Activated CD8-positive, alpha-beta T cell treated with anti-CD3 and anti-CD28 coated beads, Interleukin-2, amount 10 ng/mL, durations not matched to agents 7 days and 5 days (primary cell): ENCODE measurements at regions of chr15 and their contacts with region 1.

Region 1: DNA sequence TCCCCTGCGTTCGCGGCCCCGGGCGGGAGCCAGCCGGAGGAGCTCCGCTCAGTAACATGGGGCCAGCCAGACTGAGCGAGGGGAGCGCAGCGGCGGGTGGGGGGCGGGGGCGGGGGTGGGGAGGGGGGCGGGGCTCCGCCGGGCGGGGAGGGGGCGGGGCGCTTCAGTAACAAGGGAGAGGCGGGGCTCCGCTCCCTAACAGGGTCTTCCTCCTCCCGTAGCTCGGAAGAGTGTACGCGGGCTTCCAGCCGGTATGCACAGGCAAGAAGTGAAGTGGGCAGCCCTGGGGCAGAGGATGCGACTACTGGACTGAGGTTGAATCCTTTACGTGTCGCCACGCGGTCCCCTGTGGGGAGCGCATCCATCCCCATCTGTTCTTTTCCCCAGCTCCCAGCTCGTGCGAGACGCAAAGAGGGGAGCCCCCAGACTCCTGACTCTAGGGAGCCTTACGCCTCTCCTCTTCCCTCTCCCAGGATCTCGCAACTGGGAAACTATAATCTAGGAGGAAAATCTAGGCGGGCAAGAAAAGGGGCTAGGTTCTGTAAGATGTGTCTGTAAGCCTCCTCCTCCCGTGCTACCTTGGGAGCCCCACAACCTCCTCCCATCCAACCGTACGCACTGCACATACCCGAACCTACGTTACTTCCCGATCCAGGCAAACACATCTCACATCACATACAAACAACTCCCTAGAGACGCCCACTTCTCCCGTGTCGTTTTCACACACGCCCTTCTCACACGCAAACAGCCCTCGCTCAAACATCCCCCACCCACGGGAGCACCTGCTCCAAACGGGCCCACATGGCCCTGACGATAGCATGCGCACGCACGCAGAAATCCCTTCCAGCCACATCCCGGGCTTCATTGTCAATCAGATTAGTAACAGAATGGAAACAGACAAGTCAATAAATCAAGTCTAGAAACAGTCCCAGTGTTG is at the start of gene SHF:
- DNase-seq: peak; percentile 51
- ATAC-seq: peak; percentile 80
- H3K4me3 Mint-ChIP-seq: peak within 1 kb of the TSS; percentile 69
- H3K27ac Mint-ChIP-seq: peak within 1 kb of the TSS; percentile 35
- H3K4me1 Mint-ChIP-seq: peaks cover 11% of the 10 kb centered on the region
- H3K27me3 Mint-ChIP-seq: peaks cover 21% of the 10 kb centered on the region
- total RNA-seq, gene SHF: 0.57 to 1.3 TPM

Region 2: GRCh38 chr15:45198337-45199135 is 10.4 kb after region 1 on chr15:
- CTCF ChIA-PET with region 1: interaction called, 30 read pairs
- POLR2A ChIA-PET with region 1: interaction called, 33 read pairs
- DNase-seq: peak; percentile 97
- ATAC-seq: peak; percentile 74
- H3K4me3 Mint-ChIP-seq: no peak overlapping the region
- H3K27ac Mint-ChIP-seq: no peak overlapping the region
- H3K4me1 Mint-ChIP-seq: peaks cover 14% of the 10 kb centered on the region
- H3K27me3 Mint-ChIP-seq: peaks cover 2% of the 10 kb centered on the region

Region 3: DNA sequence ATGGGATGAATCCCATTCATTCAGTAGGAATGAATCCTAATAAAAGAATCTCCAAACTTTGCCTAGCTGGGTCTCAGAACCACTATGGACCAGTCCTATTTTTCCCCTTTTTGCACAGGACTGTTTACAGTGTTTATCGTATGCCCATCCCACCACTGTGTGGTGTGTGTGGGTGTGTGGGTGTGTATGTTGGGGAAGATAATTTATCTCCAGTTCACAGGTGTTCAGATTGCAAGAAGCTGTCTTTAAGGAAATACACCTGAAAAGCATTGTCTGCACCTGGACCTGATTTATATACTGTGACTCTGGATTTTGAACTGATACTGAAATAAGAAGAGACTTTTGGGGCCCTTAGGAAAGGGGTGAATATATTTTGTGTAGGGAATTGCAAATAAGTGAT is 24.3 kb after region 1 on chr15:
- CTCF ChIA-PET with region 1: no interaction called
- POLR2A ChIA-PET with region 1: no interaction called
- DNase-seq: no peak
- ATAC-seq: no peak
- H3K4me3 Mint-ChIP-seq: no peak overlapping the region
- H3K27ac Mint-ChIP-seq: no peak overlapping the region
- H3K4me1 Mint-ChIP-seq: no peaks in the 10 kb centered on the region
- H3K27me3 Mint-ChIP-seq: peaks cover 13% of the 10 kb centered on the region

Region 4: GRCh38 chr15:45279024-45279698 is 91.0 kb after region 1 on chr15:
- CTCF ChIA-PET with region 1: no interaction called
- POLR2A ChIA-PET with region 1: no interaction called
- DNase-seq: peak; percentile 97
- ATAC-seq: peak; percentile 100
- H3K4me3 Mint-ChIP-seq: peak overlapping the region; percentile 86
- H3K27ac Mint-ChIP-seq: peak overlapping the region; percentile 83
- H3K4me1 Mint-ChIP-seq: peaks cover 25% of the 10 kb centered on the region
- H3K27me3 Mint-ChIP-seq: no peaks in the 10 kb centered on the region